ENCODE measurements at regions of chr20 and their contacts with region 1.

Region 1: DNA sequence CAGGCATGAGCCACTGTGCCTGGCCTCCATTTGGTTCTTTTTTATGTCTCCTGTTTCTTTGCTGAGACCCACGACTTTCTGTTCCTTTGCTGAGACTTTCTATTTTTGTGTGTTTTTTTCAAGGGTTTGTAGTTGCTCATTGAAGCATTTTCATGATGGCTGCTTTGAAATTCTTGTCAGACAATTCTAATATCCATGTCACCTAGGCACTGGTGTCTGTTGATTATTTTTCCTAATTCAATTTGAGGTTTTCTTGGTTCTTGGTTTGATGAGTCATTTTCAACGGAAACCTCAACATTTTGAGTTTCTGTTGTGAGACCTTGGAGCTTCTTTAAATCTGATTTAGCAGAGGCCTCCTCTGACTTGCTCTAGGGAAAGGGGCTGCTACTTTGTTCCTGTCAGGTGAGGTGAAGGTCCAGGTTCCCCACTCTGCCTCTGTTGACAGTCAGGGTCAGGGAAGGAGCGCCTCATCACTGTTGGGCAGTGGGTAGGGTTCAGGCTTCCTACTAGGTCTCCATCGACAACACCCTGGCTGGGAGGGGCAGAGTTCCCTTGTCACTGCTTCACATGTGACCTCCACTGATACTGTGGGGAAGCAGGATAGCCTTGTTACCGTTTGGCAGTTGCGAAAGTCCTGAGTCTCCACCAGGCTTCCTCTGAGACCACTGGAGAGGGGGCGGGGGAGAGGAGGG is 67.2 kb upstream of the RNF24 start:
- DNase-seq: peak; percentile 67
- H3K4me3 Mint-ChIP-seq: peak overlapping the region; percentile 57
- H3K27ac Mint-ChIP-seq: peak overlapping the region; percentile 91
- H3K4me1 Mint-ChIP-seq: peaks cover 44% of the 10 kb centered on the region
- H3K27me3 Mint-ChIP-seq: peaks cover 4% of the 10 kb centered on the region

Region 2: GRCh38 chr20:3753098-3753980 is 329.2 kb before region 1 on chr20:
- CTCF ChIA-PET with region 1: interaction called, 5 read pairs
- intact Hi-C with region 1: loop called (anchors 1 kb)
- DNase-seq: peak; percentile 81
- H3K4me3 Mint-ChIP-seq: no peak overlapping the region
- H3K27ac Mint-ChIP-seq: no peak overlapping the region
- H3K4me1 Mint-ChIP-seq: peaks cover 7% of the 10 kb centered on the region
- H3K27me3 Mint-ChIP-seq: no peaks in the 10 kb centered on the region

Region 3: DNA sequence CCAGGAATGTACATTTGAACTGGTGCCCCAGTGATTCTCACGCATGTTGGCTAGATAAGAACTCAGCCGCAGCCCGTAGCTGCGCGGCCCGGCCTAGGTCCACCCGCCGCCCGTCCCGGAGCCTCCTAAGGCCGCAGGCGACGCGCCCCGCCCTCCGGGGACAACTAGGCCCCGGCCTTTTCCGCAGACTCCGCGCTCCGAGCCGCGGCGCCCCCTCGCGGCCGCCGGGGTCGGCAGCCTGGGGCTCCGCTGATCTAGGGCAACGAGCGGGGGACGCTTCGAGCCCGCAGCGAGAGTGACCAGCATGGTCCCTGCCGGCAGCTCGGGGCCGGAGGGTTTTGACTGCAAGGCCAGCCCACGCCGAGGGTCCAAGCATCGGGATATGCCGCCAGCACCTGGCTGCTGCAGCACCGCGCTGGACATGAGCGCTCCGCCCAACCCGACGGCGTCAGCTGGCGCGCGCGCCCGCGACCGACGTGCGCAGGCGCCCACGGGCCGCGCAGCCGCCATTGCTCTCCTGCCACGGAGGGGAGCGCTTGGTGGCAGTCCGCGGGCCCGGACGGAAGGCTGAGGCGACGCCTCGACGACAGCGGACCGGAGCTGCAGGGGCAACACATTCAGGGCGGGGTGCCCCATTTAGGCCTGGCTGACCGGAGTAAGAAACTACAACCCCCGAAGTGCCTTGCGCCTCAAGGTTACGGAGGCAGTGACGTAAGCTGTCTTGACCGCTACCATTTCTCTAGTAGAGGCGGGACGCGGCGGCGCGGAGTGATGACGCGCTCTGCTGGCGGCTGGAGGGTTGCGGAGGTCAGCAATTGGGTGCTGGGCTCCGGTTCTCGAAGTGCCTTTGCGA is 262.3 kb before region 1 on chr20 and contains the start of gene AP5S1:
- CTCF ChIA-PET with region 1: no interaction called
- intact Hi-C with region 1: loop called (anchors 1 kb)
- DNase-seq: peak; percentile 96
- H3K4me3 Mint-ChIP-seq: peak within 1 kb of the TSS; percentile 85
- H3K27ac Mint-ChIP-seq: peak within 1 kb of the TSS; percentile 94
- H3K4me1 Mint-ChIP-seq: peaks cover 36% of the 10 kb centered on the region
- H3K27me3 Mint-ChIP-seq: no peaks in the 10 kb centered on the region
- total RNA-seq, gene AP5S1: 8.0 to 8.2 TPM

Region 4: GRCh38 chr20:3995067-3995748 is 87.3 kb before region 1 on chr20:
- CTCF ChIA-PET with region 1: interaction called, 4 read pairs
- intact Hi-C with region 1: loop called (anchors 5 kb)
- DNase-seq: peak; percentile 34
- H3K4me3 Mint-ChIP-seq: no peak overlapping the region
- H3K27ac Mint-ChIP-seq: peak overlapping the region; percentile 68
- H3K4me1 Mint-ChIP-seq: peaks cover 46% of the 10 kb centered on the region
- H3K27me3 Mint-ChIP-seq: no peaks in the 10 kb centered on the region

Region 5: DNA sequence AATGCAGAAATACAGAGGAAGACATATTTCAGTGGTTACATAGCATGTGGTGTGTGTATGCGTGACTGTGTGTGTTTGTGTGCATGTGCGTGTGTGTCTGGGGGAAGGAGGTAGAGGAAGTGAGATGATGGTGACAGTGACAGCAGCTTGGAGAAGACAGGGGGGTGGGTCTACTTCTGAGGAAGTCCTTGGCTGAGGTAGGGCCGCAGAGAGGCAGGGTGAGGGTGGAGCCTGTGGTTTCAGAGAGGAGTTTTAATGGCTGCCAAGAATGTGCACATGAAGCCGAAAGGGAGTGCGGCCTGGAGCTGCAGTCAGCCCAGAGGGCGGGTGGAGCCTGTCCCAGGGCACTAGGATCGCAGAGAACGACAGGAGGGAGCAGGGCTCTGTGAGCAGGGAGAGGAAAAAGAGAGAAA is 44.5 kb before region 1 on chr20:
- CTCF ChIA-PET with region 1: no interaction called
- intact Hi-C with region 1: loop called (anchors 1 kb)
- DNase-seq: peak; percentile 90
- H3K4me3 Mint-ChIP-seq: peak overlapping the region; percentile 82
- H3K27ac Mint-ChIP-seq: peak overlapping the region; percentile 95
- H3K4me1 Mint-ChIP-seq: peaks cover 15% of the 10 kb centered on the region
- H3K27me3 Mint-ChIP-seq: no peaks in the 10 kb centered on the region